BJ (cell line): ENCODE measurements at regions of chr12 and their contacts with region 1.

Region 1: GRCh38 chr12:85672436-85672835 is 163.8 kb downstream of the RASSF9 start:
- DNase-seq: no peak
- H3K4me3 ChIP-seq: no peak overlapping the region
- H3K27me3 ChIP-seq: no peaks in the 10 kb centered on the region; the same call in 1 of the 2 replicates
- CTCF ChIP-seq: no peak

Region 2: DNA sequence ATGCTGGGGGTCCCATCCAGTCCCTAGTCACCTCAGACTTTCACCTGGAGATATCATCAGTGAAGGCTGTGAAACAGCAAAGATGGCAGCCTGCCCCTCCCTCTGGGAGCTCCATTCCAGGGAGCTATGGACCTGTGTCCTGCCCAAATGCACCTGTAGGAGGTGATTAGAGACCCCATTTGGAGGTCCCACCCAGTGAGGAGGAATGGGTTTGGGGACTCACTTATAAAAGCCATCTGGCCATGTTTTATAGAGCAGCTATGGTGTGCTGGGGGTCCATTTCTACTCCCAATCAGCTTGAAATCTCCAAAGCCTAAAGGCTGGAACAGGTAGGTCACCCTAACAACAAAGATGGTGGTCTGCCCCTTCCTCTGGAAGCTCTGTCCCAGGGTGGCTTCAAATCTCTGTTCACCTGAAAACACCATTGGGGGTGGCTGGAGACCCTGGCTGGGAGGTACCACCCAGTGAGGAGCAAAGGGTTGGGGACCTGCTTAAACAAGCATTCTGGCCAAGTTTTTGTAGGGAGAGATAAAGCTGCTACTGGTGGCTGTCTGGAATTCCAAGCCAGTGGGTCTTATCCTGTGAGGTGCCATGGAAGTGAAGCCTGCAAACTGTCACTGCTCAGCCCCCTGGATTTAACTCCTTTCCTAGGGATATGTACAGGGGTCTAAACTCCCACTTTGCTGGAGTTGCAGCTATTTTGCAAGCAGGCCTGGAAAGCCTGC is 18.5 kb before region 1 on chr12:
- CTCF ChIA-PET with region 1: interaction called, 3 read pairs
- POLR2A ChIA-PET with region 1: interaction called, 25 read pairs
- DNase-seq: no peak
- H3K4me3 ChIP-seq: no peak overlapping the region
- H3K27me3 ChIP-seq: no peaks in the 10 kb centered on the region
- CTCF ChIP-seq: no peak